GM12878 (cell line): ENCODE measurements at regions of chr15 and their contacts with region 1.

Region 1: GRCh38 chr15:65286704-65287519 is at the start of gene PARP16:
- DNase-seq: peak; percentile 77
- ATAC-seq: peak; percentile 97
- H3K4me3 ChIP-seq: peak within 1 kb of the TSS; percentile 74
- H3K27ac ChIP-seq: peak within 1 kb of the TSS; percentile 74
- H3K4me1 ChIP-seq: peaks cover 11% of the 10 kb centered on the region
- H3K27me3 ChIP-seq: no peaks in the 10 kb centered on the region
- CTCF ChIP-seq: peak in 1 of 3 experiments; percentile 51; a peak in 2 of 6 replicates
- EP300 ChIP-seq: no peak
- POLR2A ChIP-seq: peak; percentile 87
- RAD21 ChIP-seq: no peak
- polyA plus RNA-seq, gene PARP16: 4.9 to 7.6 TPM

Region 2: DNA sequence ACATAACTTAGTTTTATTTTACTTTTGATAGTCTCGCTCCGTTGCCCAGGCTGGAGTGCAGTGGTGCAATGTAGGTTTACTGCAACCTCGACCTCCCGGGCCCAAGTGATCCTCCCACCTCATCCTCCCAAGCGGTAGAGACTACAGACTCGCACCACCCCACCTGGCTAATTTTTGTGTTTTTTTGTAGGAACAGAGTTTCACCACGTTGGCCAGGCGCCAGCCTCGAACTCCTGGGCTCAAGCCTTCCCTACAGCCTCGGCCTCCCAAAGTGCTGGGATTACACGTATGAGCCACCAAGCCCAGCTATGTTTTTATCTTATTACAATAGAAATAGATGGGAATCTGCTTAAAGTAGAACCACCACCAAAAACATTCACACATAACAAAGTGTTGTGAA is 11.8 kb after region 1 on chr15:
- CTCF ChIA-PET with region 1: interaction called, 29 read pairs
- POLR2A ChIA-PET with region 1: interaction called, 18 read pairs
- RAD21 ChIA-PET with region 1: interaction called, 17 read pairs
- SMC1A ChIA-PET with region 1: interaction called, 10 read pairs
- in situ Hi-C with region 1: no loop called
- intact Hi-C with region 1: loop called (anchors 1 kb)
- DNase-seq: no peak
- ATAC-seq: no peak
- H3K4me3 ChIP-seq: no peak overlapping the region
- H3K27ac ChIP-seq: no peak overlapping the region
- H3K4me1 ChIP-seq: peaks cover 9% of the 10 kb centered on the region
- H3K27me3 ChIP-seq: no peaks in the 10 kb centered on the region
- CTCF ChIP-seq: no peak
- EP300 ChIP-seq: no peak
- POLR2A ChIP-seq: no peak
- RAD21 ChIP-seq: no peak

Region 3: GRCh38 chr15:65304389-65305144 is 17.7 kb after region 1 on chr15 and contains the start of gene RNU5B-1:
- CTCF ChIA-PET with region 1: interaction called, 13 read pairs
- POLR2A ChIA-PET with region 1: interaction called, 18 read pairs
- RAD21 ChIA-PET with region 1: interaction called, 18 read pairs
- SMC1A ChIA-PET with region 1: interaction called, 10 read pairs
- in situ Hi-C with region 1: no loop called
- intact Hi-C with region 1: no loop called
- DNase-seq: peak; percentile 96
- ATAC-seq: peak; percentile 86
- H3K4me3 ChIP-seq: peak within 1 kb of the TSS; percentile 33
- H3K27ac ChIP-seq: peak within 1 kb of the TSS; percentile 97
- H3K4me1 ChIP-seq: peaks cover 10% of the 10 kb centered on the region
- H3K27me3 ChIP-seq: no peaks in the 10 kb centered on the region
- CTCF ChIP-seq: peak; percentile 82 to 91 (median 89)
- EP300 ChIP-seq: no peak
- POLR2A ChIP-seq: peak; percentile 96
- RAD21 ChIP-seq: peak; percentile 34; the same call in 1 of the 2 replicates
- polyA plus RNA-seq, gene RNU5B-1: not detected

Region 4: DNA sequence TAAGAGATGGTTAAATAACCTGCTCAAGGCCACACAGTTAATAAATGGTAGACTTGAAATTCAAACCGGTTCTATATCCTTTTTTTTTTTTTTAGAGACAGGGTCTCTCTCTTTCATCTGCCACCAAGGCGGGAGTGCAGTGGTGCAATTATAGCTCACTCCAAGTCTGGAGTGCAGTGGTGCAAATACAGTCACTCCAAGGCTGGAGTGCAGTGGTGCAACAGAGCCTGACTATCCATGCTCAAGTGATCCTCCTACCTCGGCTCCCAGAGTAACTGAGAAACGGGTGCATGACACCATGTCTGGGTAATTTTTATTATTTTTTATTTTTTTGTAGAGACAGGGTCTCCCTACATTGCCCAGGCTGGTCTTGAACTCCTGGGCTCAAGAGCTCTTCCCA is 207.2 kb after region 1 on chr15:
- CTCF ChIA-PET with region 1: no interaction called
- POLR2A ChIA-PET with region 1: no interaction called
- RAD21 ChIA-PET with region 1: no interaction called
- SMC1A ChIA-PET with region 1: no interaction called
- in situ Hi-C with region 1: no loop called
- intact Hi-C with region 1: no loop called
- DNase-seq: no peak
- ATAC-seq: no peak
- H3K4me3 ChIP-seq: no peak overlapping the region
- H3K27ac ChIP-seq: no peak overlapping the region
- H3K4me1 ChIP-seq: no peaks in the 10 kb centered on the region
- H3K27me3 ChIP-seq: no peaks in the 10 kb centered on the region
- CTCF ChIP-seq: no peak
- EP300 ChIP-seq: no peak
- POLR2A ChIP-seq: no peak
- RAD21 ChIP-seq: no peak